A673 (cell line): ENCODE measurements at regions of chr4 and their contacts with region 1.

Region 1: DNA sequence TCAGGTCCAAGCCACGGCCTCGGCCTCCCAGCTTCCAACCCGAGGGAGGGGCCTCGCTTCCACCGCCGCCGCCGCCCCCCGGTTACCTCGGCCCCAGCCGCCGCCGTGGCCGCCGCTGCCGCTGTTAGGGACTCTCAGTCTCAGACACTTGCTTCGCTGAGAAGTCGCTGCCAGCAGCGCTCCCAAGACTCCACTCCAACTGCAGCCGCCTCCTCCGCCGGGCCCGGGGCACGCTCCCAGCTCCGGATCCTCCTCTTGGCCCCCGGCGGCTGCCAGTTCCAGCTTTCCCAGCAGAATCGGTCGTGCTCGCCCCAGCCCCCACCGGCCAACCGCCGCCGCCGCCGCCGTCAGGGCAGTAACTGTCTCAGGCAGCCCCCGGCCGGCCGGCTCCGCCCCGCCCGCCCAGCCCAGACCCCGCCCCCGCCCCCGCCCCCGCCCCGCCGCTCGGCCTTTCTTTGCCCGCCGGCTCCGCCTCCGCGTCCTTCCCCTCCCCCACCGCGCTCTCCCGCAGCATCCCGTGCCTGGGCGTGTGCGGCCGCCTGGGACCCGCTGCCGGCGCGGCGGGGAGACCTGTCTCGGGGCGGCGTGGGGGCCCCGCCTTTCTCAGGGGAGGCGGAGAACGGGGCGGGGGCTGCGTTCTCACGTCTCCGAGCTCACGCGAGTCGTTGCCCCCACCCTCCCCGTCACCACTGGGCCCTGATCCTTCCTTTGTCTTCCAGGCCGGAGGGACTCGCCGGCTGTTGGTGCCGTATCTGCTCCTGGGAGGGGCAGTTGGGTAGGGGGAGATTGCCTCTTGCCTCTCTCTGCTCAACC is at the start of gene ANKRD50:
- DNase-seq: peak; percentile 96
- H3K4me3 ChIP-seq: peak within 1 kb of the TSS; percentile 92
- H3K27ac ChIP-seq: peak within 1 kb of the TSS; percentile 96
- H3K4me1 ChIP-seq: peaks cover 21% of the 10 kb centered on the region
- H3K27me3 ChIP-seq: no peaks in the 10 kb centered on the region
- CTCF ChIP-seq: no peak
- total RNA-seq, gene ANKRD50: 16.7 and 18.4 TPM in 2 replicates

Region 2: DNA sequence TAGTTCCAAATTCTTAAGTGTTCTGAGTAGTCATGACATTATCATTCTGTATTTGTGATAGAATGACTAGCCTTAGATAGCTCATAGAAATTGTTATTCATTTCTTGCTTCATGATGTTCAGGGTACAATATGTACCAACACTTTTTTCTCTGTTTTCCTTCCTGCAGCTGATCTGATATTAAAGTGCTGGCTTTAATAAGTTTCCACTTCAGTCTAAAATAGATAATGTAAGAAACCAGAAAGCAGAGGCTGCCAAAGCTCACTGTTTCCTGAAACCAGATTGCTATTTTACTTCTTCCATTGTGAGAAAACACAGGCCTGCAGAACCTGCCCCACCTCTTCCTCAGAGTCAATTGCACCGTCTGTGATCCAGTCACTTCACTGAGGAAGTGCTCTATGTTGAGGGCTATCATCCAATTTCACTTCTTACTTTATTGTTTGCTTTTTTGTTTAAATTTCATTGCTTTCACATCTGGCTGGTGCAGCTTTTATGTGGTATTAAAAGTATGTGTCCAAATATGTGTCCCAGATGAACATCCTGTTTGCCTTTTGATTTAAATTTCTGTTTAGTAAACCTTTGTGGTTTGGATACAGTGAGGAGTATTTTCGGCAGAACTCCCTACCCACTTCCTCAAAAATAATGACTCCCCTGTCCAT is 652.2 kb before region 1 on chr4:
- CTCF ChIA-PET with region 1: no interaction called
- POLR2A ChIA-PET with region 1: no interaction called
- intact Hi-C with region 1: no loop called
- DNase-seq: peak; percentile 3
- H3K4me3 ChIP-seq: no peak overlapping the region
- H3K27ac ChIP-seq: no peak overlapping the region
- H3K4me1 ChIP-seq: no peaks in the 10 kb centered on the region
- H3K27me3 ChIP-seq: no peaks in the 10 kb centered on the region
- CTCF ChIP-seq: no peak

Region 3: DNA sequence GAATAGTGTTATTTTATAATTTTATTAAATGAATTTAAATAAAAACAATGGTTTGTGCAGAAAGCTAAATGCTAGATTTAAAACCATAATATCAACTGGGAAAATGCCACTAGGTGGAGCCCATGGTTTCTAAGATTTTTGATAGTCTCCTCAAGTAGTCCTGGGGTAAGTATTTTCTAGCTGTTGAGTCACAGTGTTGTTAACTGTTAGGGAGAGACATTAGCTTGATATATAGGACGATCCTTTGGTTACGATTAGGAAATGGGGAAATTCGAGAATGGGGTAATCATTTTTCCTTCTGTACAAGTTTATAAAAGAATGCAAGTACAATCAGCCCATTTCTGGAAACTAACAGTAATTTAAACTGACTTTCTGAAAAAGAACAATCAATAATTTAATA is 378.5 kb before region 1 on chr4:
- CTCF ChIA-PET with region 1: no interaction called
- POLR2A ChIA-PET with region 1: no interaction called
- intact Hi-C with region 1: loop called (anchors 2 kb)
- DNase-seq: peak; percentile 87
- H3K4me3 ChIP-seq: no peak overlapping the region
- H3K27ac ChIP-seq: no peak overlapping the region
- H3K4me1 ChIP-seq: peaks cover 4% of the 10 kb centered on the region
- H3K27me3 ChIP-seq: no peaks in the 10 kb centered on the region
- CTCF ChIP-seq: peak; percentile 68

Region 4: GRCh38 chr4:124427095-124427767 is 285.3 kb before region 1 on chr4:
- CTCF ChIA-PET with region 1: no interaction called
- POLR2A ChIA-PET with region 1: no interaction called
- intact Hi-C with region 1: loop called (anchors 5 kb)
- DNase-seq: no peak
- H3K4me3 ChIP-seq: no peak overlapping the region
- H3K27ac ChIP-seq: no peak overlapping the region
- H3K4me1 ChIP-seq: peaks cover 39% of the 10 kb centered on the region
- H3K27me3 ChIP-seq: no peaks in the 10 kb centered on the region
- CTCF ChIP-seq: no peak

Region 5: DNA sequence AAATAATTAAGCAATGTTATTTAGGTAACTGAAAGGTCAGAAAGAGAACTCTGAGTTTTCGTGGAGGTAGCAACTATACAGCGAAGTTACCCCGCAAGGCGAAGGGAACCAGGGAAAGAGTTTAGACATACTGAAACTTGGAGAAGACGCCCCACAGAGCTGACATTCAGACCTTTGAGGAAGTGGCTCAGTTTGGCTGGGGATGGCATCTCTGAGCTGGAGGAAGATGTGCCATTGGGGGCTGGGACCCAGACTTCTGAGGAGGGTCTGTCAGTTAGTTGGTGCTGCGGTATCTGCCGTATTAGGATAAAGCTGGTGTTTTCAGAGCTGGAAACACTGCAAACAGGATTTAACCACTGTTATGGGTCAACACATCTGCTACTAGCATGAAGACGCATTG is 156.6 kb before region 1 on chr4:
- CTCF ChIA-PET with region 1: no interaction called
- POLR2A ChIA-PET with region 1: no interaction called
- intact Hi-C with region 1: no loop called
- DNase-seq: no peak
- H3K4me3 ChIP-seq: no peak overlapping the region
- H3K27ac ChIP-seq: no peak overlapping the region
- H3K4me1 ChIP-seq: no peaks in the 10 kb centered on the region
- H3K27me3 ChIP-seq: no peaks in the 10 kb centered on the region
- CTCF ChIP-seq: no peak

Region 6: GRCh38 chr4:124940387-124940786 is 227.8 kb after region 1 on chr4:
- CTCF ChIA-PET with region 1: no interaction called
- POLR2A ChIA-PET with region 1: no interaction called
- intact Hi-C with region 1: loop called (anchors 10 kb)
- DNase-seq: peak; percentile 87
- H3K4me3 ChIP-seq: no peak overlapping the region
- H3K27ac ChIP-seq: no peak overlapping the region
- H3K4me1 ChIP-seq: peaks cover 25% of the 10 kb centered on the region
- H3K27me3 ChIP-seq: no peaks in the 10 kb centered on the region
- CTCF ChIP-seq: no peak

Region 7: GRCh38 chr4:125244848-125245450 is 532.4 kb after region 1 on chr4:
- CTCF ChIA-PET with region 1: no interaction called
- POLR2A ChIA-PET with region 1: no interaction called
- intact Hi-C with region 1: loop called (anchors 5 kb)
- DNase-seq: peak; percentile 39
- H3K4me3 ChIP-seq: no peak overlapping the region
- H3K27ac ChIP-seq: no peak overlapping the region
- H3K4me1 ChIP-seq: no peaks in the 10 kb centered on the region
- H3K27me3 ChIP-seq: no peaks in the 10 kb centered on the region
- CTCF ChIP-seq: peak; percentile 56

Region 8: DNA sequence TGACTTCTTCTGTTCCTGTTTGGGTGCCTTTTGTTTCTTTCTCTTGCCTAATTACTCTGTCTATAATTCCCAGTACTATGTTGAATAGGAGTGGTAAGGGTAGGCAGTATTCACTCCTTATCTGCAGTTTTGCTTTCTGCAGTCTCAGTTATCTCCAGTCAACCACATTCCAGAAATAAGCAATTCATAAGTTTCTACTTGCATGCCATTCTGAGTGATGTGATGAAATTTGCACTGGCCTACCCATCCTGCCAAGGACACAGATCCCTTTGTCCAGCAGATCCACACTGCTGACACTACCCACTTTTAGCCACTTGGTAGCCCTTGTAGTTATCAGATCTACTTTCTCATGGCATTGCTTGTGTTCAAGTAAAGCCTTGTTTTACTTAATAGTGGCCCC is 1948.6 kb after region 1 on chr4:
- CTCF ChIA-PET with region 1: no interaction called
- POLR2A ChIA-PET with region 1: no interaction called
- intact Hi-C with region 1: no loop called
- DNase-seq: no peak
- H3K4me3 ChIP-seq: no peak overlapping the region
- H3K27ac ChIP-seq: no peak overlapping the region
- H3K4me1 ChIP-seq: no peaks in the 10 kb centered on the region
- H3K27me3 ChIP-seq: no peaks in the 10 kb centered on the region
- CTCF ChIP-seq: no peak